Cardiac septum (tissue), 1 donor: ENCODE measurements at regions of chr20 and their contacts with region 1.

Region 1: GRCh38 chr20:63216041-63216848 is at the start of gene YTHDF1:
- DNase-seq: peak; percentile 99
- total RNA-seq, gene YTHDF1: 23.1 TPM

Region 2: DNA sequence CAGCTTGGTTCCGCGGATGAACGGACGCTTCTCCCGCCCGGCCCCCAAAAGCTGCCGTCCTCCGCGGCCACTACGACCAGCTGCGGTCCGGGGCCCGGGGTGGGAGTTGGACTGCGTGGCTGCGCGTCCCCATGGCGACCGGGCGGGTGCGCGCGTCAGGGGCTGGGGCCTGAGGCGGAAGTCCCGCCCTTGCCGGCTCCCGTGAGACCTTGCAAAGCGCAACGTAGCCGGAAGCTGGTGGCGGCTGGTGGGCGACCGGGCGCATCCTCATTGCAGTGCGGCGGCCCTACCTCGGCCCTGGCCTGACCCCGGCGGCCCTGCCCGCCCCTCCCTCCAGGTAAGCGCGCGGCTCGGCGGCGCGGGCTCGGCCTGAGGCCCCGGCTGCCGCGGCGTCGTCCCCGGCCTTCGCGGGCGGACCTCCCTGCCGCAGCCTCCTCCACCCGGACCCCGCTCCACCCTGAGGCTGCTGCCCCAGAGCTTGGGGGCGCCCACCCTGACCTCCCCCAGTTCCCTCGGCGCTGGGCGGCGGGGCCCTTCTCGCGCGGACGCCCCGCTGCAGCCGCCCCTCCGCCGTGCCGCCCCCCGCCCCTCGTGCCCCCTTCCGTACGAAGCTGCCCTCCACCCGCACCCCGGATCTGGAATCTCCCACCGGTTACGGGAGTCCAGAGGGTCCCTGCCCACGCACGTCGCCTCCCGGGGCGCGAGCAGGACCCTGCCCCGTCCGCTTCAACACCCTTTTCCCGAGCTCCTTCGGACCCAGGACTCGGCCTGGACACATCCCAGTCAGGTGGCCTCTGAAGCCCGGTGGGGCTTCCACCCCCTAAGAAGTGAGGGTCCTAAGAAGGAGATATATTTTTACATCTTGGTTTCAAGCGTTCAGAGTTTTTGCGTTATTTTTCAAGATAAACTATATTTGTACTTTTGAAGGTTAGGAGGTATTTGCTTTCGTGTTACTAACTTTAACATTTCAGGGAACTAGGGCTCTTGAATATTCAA is 56.6 kb after region 1 on chr20 and contains the start of gene ARFGAP1:
- intact Hi-C with region 1: loop called (anchors 2 kb)
- DNase-seq: peak; percentile 96
- total RNA-seq, gene ARFGAP1: 49.5 TPM

Region 3: GRCh38 chr20:64255361-64256281 is 1039.4 kb after region 1 on chr20 and contains the start of gene PCMTD2:
- intact Hi-C with region 1: loop called (anchors 5 kb)
- DNase-seq: peak; percentile 91
- total RNA-seq, gene PCMTD2: 46.9 TPM